Activated CD4-positive, alpha-beta memory T cell treated with anti-CD3 and anti-CD28 coated beads for 36 hours (primary cell): ENCODE measurements at regions of chr6 and their contacts with region 1.

Region 1: GRCh38 chr6:16514249-16514648 is 247.0 kb downstream of the ATXN1 start:
- DNase-seq: peak; percentile 39
- H3K4me3 Mint-ChIP-seq: no peak overlapping the region
- H3K27ac Mint-ChIP-seq: no peak overlapping the region
- H3K4me1 Mint-ChIP-seq: peaks cover 79% of the 10 kb centered on the region
- H3K27me3 Mint-ChIP-seq: no peaks in the 10 kb centered on the region

Region 2: DNA sequence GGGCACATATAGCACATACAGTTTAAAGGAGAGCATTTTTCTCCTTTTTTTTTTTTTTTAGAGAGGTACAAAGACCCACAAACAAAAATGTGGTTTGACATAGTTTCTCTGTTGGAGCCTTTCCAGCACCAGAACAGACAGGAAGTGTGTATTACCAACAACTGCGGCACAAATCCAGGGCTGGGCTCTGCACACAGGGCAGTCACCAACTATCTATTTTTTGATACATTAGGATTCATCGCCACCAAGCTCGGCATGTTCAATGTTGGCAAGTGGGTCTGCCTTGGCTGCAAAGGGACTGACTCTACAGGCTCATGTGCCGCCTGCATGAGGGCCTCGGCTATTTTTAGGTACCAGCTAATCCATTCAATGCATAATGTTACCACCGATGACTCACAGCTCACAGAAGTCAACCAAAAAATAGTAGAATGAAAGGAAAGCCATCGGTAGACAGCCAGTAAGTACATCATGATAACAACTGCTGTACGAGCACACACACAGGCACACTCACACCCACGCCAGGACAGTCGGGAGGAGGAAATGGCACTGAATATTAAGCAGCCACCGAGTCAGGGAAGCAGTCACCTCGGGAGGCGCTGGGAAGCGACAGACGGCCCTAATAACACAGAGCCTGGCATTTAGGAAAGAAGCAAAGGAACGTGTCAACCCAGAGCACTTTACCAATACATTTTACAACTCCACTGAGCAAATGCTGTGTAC is 194.3 kb before region 1 on chr6:
- CTCF ChIA-PET with region 1: interaction called, 4 read pairs
- POLR2A ChIA-PET with region 1: no interaction called
- intact Hi-C with region 1: loop called (anchors 1 kb)
- DNase-seq: peak; percentile 81
- H3K4me3 Mint-ChIP-seq: peak overlapping the region; percentile 50
- H3K27ac Mint-ChIP-seq: peak overlapping the region; percentile 84
- H3K4me1 Mint-ChIP-seq: peaks cover 82% of the 10 kb centered on the region
- H3K27me3 Mint-ChIP-seq: no peaks in the 10 kb centered on the region

Region 3: DNA sequence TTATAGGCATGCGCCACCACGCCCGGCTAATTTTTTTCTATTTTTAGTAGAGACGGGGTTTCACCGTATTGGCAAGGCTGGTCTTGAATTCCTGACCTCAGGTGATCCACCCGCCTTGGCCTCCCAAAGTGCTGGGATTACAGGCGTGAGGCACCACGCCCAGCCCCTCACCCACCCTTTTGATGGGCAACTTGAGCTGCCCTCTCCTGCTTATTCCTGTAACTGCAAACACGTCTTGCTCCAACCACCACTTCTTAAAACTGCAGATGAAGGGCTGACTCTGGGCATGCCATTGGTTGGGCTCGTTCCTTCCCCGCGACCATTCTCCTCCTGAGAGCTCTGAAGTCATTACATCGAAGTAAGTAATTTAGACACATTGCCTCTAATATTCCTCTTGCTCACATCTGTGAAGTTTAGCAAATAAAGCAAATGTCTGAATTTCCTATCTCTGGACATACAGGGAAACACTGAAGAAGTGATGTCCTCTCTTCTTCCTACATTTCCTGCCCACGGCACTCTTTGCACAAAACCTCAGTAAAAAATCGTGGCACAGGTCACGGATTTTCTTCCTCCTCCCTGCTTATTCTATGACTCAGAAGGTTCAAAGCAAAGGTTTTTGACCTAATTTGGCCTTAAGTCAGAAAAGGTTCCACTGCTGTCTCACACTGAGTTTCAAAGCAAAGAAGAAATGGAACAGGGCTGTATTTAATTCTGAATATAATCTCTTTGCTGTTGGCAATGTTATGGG is 158.4 kb before region 1 on chr6:
- CTCF ChIA-PET with region 1: no interaction called
- POLR2A ChIA-PET with region 1: no interaction called
- intact Hi-C with region 1: no loop called
- DNase-seq: no peak
- H3K4me3 Mint-ChIP-seq: no peak overlapping the region
- H3K27ac Mint-ChIP-seq: no peak overlapping the region
- H3K4me1 Mint-ChIP-seq: peaks cover 10% of the 10 kb centered on the region
- H3K27me3 Mint-ChIP-seq: no peaks in the 10 kb centered on the region

Region 4: GRCh38 chr6:16432075-16433032 is 81.9 kb before region 1 on chr6:
- CTCF ChIA-PET with region 1: interaction called, 4 read pairs
- POLR2A ChIA-PET with region 1: interaction called, 4 read pairs
- intact Hi-C with region 1: loop called (anchors 2 kb)
- DNase-seq: peak; percentile 58
- H3K4me3 Mint-ChIP-seq: no peak overlapping the region
- H3K27ac Mint-ChIP-seq: peak overlapping the region; percentile 100
- H3K4me1 Mint-ChIP-seq: peaks cover 66% of the 10 kb centered on the region
- H3K27me3 Mint-ChIP-seq: no peaks in the 10 kb centered on the region

Region 5: DNA sequence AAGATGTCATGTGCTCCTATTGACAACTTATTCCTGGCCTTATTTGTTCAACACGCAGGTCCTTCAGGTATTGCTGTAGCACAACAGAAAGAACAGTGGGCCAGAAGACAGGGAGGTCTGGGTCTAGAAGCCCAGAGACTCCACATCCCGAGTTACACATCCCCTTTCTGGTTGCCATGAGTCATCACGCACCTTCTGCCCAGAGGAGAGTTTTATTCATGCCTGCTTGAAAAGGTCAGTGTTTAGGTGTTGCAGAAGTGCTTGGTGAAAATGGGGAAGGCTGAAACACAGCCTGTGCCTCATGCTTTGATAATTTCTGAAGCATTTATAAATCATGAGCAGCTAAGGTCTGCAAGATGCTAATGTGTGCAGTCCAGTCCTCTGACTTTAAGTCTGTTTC is 19.5 kb before region 1 on chr6:
- CTCF ChIA-PET with region 1: interaction called, 34 read pairs
- POLR2A ChIA-PET with region 1: no interaction called
- intact Hi-C with region 1: no loop called
- DNase-seq: no peak
- H3K4me3 Mint-ChIP-seq: no peak overlapping the region
- H3K27ac Mint-ChIP-seq: no peak overlapping the region
- H3K4me1 Mint-ChIP-seq: peaks cover 73% of the 10 kb centered on the region
- H3K27me3 Mint-ChIP-seq: no peaks in the 10 kb centered on the region

Region 6: DNA sequence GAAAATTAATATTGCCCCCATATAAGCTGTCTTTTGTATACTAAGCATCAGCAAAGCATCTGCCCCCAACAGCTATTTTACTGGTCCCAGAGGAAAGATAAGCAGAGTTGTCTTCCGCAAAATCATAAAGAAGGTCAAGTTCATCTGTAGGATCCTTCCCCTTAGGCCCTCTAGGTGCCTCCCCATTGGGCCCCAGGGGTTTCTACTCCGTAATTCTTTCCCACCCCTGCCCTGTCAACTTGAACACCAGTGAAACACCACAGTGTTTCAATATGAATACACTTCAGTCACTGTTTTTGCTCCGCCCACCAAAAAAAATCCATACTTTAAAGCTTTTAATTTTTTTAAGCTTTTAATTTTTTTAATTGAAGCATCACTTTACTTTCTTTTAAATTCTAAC is 87.8 kb after region 1 on chr6:
- CTCF ChIA-PET with region 1: interaction called, 6 read pairs
- POLR2A ChIA-PET with region 1: no interaction called
- intact Hi-C with region 1: loop called (anchors 1 kb)
- DNase-seq: peak; percentile 83
- H3K4me3 Mint-ChIP-seq: no peak overlapping the region
- H3K27ac Mint-ChIP-seq: peak overlapping the region; percentile 3
- H3K4me1 Mint-ChIP-seq: peaks cover 47% of the 10 kb centered on the region
- H3K27me3 Mint-ChIP-seq: no peaks in the 10 kb centered on the region

Region 7: GRCh38 chr6:16635291-16635809 is 121.1 kb after region 1 on chr6:
- CTCF ChIA-PET with region 1: no interaction called
- POLR2A ChIA-PET with region 1: no interaction called
- intact Hi-C with region 1: no loop called
- DNase-seq: no peak
- H3K4me3 Mint-ChIP-seq: no peak overlapping the region
- H3K27ac Mint-ChIP-seq: no peak overlapping the region
- H3K4me1 Mint-ChIP-seq: peaks cover 49% of the 10 kb centered on the region
- H3K27me3 Mint-ChIP-seq: no peaks in the 10 kb centered on the region

Region 8: GRCh38 chr6:16704401-16705045 is 190.3 kb after region 1 on chr6:
- CTCF ChIA-PET with region 1: interaction called, 23 read pairs
- POLR2A ChIA-PET with region 1: no interaction called
- intact Hi-C with region 1: no loop called
- DNase-seq: peak; percentile 86
- H3K4me3 Mint-ChIP-seq: peak overlapping the region; percentile 87
- H3K27ac Mint-ChIP-seq: peak overlapping the region; percentile 87
- H3K4me1 Mint-ChIP-seq: peaks cover 69% of the 10 kb centered on the region
- H3K27me3 Mint-ChIP-seq: no peaks in the 10 kb centered on the region